PC-9 (cell line): ENCODE measurements at regions of chr2 and their contacts with region 1.

Region 1: DNA sequence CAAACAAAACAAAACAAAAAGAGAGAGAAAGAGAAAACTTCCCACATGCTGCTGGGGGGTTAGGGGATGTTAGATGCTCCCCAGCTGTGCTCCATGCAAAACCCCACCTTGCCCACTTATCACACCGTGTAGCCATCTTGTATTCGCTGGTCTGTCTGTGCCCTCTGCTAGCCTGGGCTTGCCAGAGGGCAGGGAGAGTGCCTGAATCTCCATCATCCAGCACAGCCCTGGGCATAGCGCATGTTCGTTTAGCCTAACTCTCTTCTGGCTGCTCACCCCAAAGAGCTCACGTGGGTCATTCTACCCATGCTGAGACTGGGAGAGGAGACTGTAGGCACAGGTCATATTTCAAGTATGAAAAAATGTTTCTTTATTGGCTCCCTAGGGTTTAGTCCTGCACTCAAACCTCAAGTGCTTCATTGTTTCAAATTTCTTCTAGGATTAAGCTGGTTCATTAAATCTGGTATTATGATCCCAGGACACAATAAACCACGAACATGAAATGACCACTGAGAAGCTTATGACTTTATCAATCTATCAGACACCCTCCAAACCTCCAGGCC is 100.5 kb downstream of the KCNF1 start:
- DNase-seq: no peak
- H3K4me3 ChIP-seq: no peak overlapping the region
- H3K27ac ChIP-seq: no peak overlapping the region
- H3K4me1 ChIP-seq: no peaks in the 10 kb centered on the region
- H3K27me3 ChIP-seq: no peaks in the 10 kb centered on the region
- CTCF ChIP-seq: no peak

Region 2: GRCh38 chr2:10378189-10378588 is 634.0 kb before region 1 on chr2:
- CTCF ChIA-PET with region 1: no interaction called
- POLR2A ChIA-PET with region 1: no interaction called
- intact Hi-C with region 1: no loop called
- DNase-seq: no peak
- H3K4me3 ChIP-seq: no peak overlapping the region
- H3K27ac ChIP-seq: no peak overlapping the region
- H3K4me1 ChIP-seq: no peaks in the 10 kb centered on the region
- H3K27me3 ChIP-seq: no peaks in the 10 kb centered on the region
- CTCF ChIP-seq: no peak

Region 3: DNA sequence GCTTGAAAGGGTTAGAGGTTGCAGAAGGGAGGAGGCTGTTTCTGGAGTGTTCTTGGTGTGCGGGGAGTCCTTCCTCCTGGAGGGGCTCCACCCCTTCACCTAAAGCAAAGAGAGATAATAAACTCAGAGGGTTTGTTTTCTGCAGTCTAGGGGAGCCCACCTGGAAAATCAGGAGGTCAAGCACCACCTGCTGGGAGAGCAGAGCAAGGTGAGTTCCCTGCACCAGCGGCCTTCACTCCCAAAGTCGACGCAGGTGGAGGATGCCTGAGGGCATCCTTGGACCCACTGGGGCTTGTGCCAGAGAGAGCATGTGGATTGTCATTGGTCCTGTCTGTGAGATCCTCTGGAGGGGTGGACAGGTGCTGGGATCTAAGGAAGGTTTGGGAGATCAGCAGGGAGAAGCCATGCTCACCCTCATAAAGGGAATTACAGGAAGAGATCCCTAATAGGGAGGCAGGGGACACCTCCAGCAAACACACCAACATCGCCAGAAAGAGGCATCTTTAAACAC is 16.2 kb after region 1 on chr2:
- CTCF ChIA-PET with region 1: no interaction called
- POLR2A ChIA-PET with region 1: interaction called, 14 read pairs
- intact Hi-C with region 1: no loop called
- DNase-seq: no peak
- H3K4me3 ChIP-seq: no peak overlapping the region
- H3K27ac ChIP-seq: no peak overlapping the region
- H3K4me1 ChIP-seq: peaks cover 11% of the 10 kb centered on the region
- H3K27me3 ChIP-seq: no peaks in the 10 kb centered on the region
- CTCF ChIP-seq: no peak